G401 (cell line): ENCODE measurements at regions of chr1 and their contacts with region 1.

Region 1: DNA sequence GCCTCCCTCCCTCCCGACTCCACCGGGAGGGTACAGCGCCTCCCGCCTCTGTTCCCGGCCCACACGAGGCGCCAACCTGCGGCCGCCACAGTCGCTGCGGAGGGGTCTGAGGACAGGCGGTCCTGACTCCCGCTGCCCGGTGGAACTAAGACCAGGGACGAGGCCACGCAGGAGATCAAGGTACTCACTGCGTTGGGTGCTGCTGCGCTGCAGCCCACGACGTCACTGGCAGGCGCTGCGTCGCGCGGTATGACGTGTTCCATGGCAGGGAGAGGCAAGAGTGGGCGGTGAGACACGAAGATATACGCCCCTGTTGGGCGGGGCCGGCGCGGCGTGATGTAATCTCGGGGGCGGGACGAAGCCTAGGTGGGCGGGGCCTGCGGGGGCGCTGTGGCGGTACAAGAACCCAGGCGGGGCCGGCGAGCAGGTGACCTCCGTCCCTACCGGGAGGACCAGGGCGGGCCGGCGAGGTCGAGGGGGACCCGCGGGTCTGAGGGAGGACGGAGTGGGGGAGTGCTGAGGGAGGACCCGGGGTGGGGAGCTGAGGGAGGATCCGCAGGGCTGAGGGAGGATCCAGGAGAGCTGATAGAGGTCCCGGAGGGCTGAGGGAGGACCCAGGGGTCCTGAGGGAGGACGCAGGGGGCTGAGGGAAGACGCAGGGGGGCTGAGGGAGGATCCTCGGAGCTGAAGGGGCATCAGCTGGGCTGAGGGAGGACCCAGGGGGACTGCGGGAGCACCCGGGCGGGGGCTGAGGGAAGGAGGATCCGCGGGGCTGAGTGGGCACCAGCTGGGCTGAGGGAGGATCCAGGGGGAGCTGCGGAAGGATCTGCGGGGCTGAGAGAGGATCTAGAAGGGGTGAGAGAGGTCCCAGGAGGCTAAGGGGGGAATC is at the start of gene MRPL55:
- DNase-seq: peak; percentile 99
- total RNA-seq, gene MRPL55: 93.7 and 103 TPM in 2 replicates

Region 2: GRCh38 chr1:228165372-228166169 is 56.3 kb after region 1 on chr1 and contains the start of gene IBA57:
- in situ Hi-C with region 1: loop called (anchors 5 kb)
- DNase-seq: peak; percentile 99
- total RNA-seq, gene IBA57: 9.7 and 19.0 TPM in 2 replicates

Region 3: GRCh38 chr1:228241259-228241658 is 131.9 kb after region 1 on chr1:
- in situ Hi-C with region 1: loop called (anchors 10 kb)
- DNase-seq: no peak